ENCODE measurements at regions of chr10 and their contacts with region 1.

Region 1: GRCh38 chr10:26334932-26335573 is 103.1 kb upstream of the APBB1IP start:
- DNase-seq: peak; percentile 84
- ATAC-seq: peak; percentile 91
- H3K4me3 ChIP-seq: peak overlapping the region; percentile 45 to 66 (median 59)
- H3K4me3 Mint-ChIP-seq: peak overlapping the region; percentile 87
- H3K27ac ChIP-seq: no peak overlapping the region
- H3K27ac Mint-ChIP-seq: peak overlapping the region; percentile 69
- H3K4me1 ChIP-seq: peaks cover 5% of the 10 kb centered on the region in 2 donors
- H3K4me1 Mint-ChIP-seq: peaks cover 6% of the 10 kb centered on the region
- H3K27me3 ChIP-seq: no peaks in the 10 kb centered on the region
- H3K27me3 Mint-ChIP-seq: no peaks in the 10 kb centered on the region
- CTCF ChIP-seq: peak; percentile 95

Region 2: DNA sequence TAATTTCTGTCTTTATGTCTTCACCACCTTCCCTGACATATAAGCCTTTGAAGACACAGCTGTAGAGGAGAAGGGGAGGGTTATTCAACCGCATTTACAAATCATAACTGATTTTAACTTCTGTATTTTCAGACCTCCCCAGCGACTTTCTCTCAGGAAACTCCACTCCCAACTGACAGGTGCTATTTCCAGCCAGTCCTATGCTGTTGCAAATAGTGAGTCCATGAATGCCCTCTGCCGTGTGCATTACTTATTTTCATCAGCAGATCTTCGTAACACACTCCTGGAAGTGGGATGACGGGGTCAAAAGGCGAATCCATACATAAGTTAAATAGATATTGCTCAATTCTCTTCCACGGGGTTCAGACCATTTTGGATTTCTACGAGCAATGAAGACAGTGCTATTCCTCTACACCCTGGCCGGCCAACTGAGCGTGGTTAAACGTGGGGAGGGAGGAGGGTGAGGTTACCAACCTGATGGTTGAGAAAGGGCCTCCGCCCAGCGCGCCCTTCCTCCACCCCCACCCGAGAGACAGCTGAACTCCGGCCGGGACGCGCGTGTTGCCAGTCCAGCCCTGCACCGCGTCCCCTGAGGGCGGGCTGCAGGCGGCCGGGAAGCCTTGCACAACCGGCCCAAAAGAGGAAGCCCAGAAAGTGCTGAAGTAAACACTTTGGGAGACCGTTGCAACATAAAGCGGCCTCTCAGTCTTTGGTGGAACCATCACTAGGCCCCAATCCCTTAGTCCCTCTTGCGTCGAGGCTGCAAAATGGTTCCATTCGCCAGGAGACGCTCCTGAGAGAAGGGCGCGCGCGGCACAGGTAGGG is 102.8 kb after region 1 on chr10 and contains the start of gene APBB1IP:
- CTCF ChIA-PET with region 1: interaction called, 3 read pairs
- POLR2A ChIA-PET with region 1: no interaction called
- intact Hi-C with region 1: loop called (anchors 1 kb)
- DNase-seq: peak; percentile 81
- ATAC-seq: peak; percentile 82
- H3K4me3 ChIP-seq: peak within 1 kb of the TSS; percentile 73 to 89 (median 86)
- H3K4me3 Mint-ChIP-seq: peak within 1 kb of the TSS; percentile 95
- H3K27ac ChIP-seq: peak within 1 kb of the TSS; percentile 82 to 83
- H3K27ac Mint-ChIP-seq: peak within 1 kb of the TSS; percentile 99
- H3K4me1 ChIP-seq: peaks cover 31 to 44% of the 10 kb centered on the region in 2 donors
- H3K4me1 Mint-ChIP-seq: peaks cover 49% of the 10 kb centered on the region
- H3K27me3 ChIP-seq: no peaks in the 10 kb centered on the region
- H3K27me3 Mint-ChIP-seq: no peaks in the 10 kb centered on the region
- CTCF ChIP-seq: no peak
- total RNA-seq, gene APBB1IP: 97.0 and 99.8 TPM in 2 replicates

Region 3: GRCh38 chr10:26503911-26504310 is 168.9 kb after region 1 on chr10:
- CTCF ChIA-PET with region 1: interaction called, 33 read pairs
- POLR2A ChIA-PET with region 1: no interaction called
- intact Hi-C with region 1: loop called (anchors 1 kb)
- DNase-seq: peak; percentile 23
- ATAC-seq: no peak
- H3K4me3 ChIP-seq: no peak overlapping the region
- H3K4me3 Mint-ChIP-seq: no peak overlapping the region
- H3K27ac ChIP-seq: peak overlapping the region in 1 of 2 donors; percentile 15
- H3K27ac Mint-ChIP-seq: peak overlapping the region; percentile 21
- H3K4me1 ChIP-seq: no peaks in the 10 kb centered on the region
- H3K4me1 Mint-ChIP-seq: peaks cover 20% of the 10 kb centered on the region
- H3K27me3 ChIP-seq: no peaks in the 10 kb centered on the region
- H3K27me3 Mint-ChIP-seq: no peaks in the 10 kb centered on the region
- CTCF ChIP-seq: peak; percentile 26

Region 4: DNA sequence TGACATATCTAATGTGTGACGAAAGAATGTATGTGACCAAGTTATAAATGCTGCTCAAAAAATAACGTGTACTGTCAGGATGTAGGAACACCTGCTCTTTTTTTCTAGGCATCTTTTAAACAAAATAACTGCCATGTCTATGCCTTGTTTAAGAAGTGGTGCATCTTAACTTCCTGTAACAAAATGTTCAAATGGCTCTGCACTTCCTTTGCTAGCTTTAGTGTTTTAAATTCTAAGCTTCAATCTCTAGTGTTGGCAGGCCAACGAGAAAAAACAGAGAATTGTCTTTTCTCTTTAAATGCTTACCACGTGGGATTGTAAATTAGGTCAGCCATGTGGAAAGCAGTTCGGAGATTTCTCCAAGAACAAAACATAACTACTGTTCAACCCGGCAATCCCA is 347.9 kb after region 1 on chr10:
- CTCF ChIA-PET with region 1: interaction called, 4 read pairs
- POLR2A ChIA-PET with region 1: no interaction called
- intact Hi-C with region 1: loop called (anchors 5 kb)
- DNase-seq: no peak
- ATAC-seq: no peak
- H3K4me3 ChIP-seq: no peak overlapping the region
- H3K4me3 Mint-ChIP-seq: no peak overlapping the region
- H3K27ac ChIP-seq: no peak overlapping the region
- H3K27ac Mint-ChIP-seq: no peak overlapping the region
- H3K4me1 ChIP-seq: peaks cover 0 to 3% of the 10 kb centered on the region in 2 donors
- H3K4me1 Mint-ChIP-seq: peaks cover 5% of the 10 kb centered on the region
- H3K27me3 ChIP-seq: peaks cover 0 to 3% (median 2%) of the 10 kb centered on the region in 4 experiments
- H3K27me3 Mint-ChIP-seq: peaks cover 8% of the 10 kb centered on the region
- CTCF ChIP-seq: no peak

Region 5: GRCh38 chr10:27360581-27361172 is 1025.6 kb after region 1 on chr10:
- CTCF ChIA-PET with region 1: no interaction called
- POLR2A ChIA-PET with region 1: no interaction called
- intact Hi-C with region 1: loop called (anchors 2 kb)
- DNase-seq: peak; percentile 86
- ATAC-seq: peak; percentile 92
- H3K4me3 ChIP-seq: no peak overlapping the region
- H3K4me3 Mint-ChIP-seq: no peak overlapping the region
- H3K27ac ChIP-seq: no peak overlapping the region
- H3K27ac Mint-ChIP-seq: no peak overlapping the region
- H3K4me1 ChIP-seq: peaks cover 7 to 9% of the 10 kb centered on the region in 2 donors
- H3K4me1 Mint-ChIP-seq: peaks cover 10% of the 10 kb centered on the region
- H3K27me3 ChIP-seq: no peaks in the 10 kb centered on the region
- H3K27me3 Mint-ChIP-seq: no peaks in the 10 kb centered on the region
- CTCF ChIP-seq: peak; percentile 99